Panc1 (cell line): ENCODE measurements at regions of chr17 and their contacts with region 1.

Region 1: GRCh38 chr17:7632492-7632894 is 2.6 kb downstream of the SHBG start:
- DNase-seq: no peak
- ATAC-seq: peak; percentile 76
- H3K4me3 ChIP-seq: no peak overlapping the region
- H3K27ac ChIP-seq: no peak overlapping the region
- H3K4me1 ChIP-seq: 0 out of 2 replicates have a peak, but pooled peaks cover 2% of the 10 kb centered on the region
- H3K27me3 ChIP-seq: no peaks in the 10 kb centered on the region
- CTCF ChIP-seq: peak; percentile 80

Region 2: DNA sequence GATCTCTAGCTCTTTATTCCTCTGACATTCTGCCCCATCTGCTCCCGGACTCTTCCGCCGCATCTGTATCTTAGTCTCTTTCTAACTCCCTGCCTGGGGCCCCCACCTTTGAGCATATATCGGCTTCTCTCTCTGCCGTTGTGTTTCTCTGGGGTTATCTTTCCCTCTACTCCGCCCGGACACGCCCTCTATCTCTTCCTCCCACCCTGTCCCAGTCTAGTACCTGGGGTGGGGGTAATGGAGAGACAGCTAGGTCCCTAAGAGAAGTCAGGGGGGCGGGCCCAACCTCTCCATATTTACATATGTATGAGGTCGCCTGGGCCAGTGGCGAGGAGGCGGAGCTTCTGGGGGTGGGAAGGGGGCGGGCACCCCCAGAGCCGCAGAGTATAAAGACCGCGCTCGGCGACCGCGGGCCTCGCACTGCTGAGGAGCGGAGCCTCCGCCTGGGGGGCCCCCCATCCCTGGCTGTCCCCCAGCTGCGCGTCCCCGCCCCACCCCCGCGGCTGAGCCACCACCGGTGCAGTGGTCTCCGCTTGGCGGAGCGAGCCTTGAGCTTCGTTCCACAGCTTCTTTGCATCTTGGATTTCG is 18.1 kb after region 1 on chr17 and contains the start of gene ATP1B2:
- CTCF ChIA-PET with region 1: no interaction called
- POLR2A ChIA-PET with region 1: interaction called, 10 read pairs
- in situ Hi-C with region 1: no loop called
- intact Hi-C with region 1: no loop called
- DNase-seq: no peak
- ATAC-seq: peak; percentile 84
- H3K4me3 ChIP-seq: peak within 1 kb of the TSS; percentile 26 to 47
- H3K27ac ChIP-seq: no peak within 1 kb of the TSS
- H3K4me1 ChIP-seq: no peaks in the 10 kb centered on the region
- H3K27me3 ChIP-seq: peaks cover 2% of the 10 kb centered on the region; the same call in 1 of the 2 replicates
- CTCF ChIP-seq: no peak
- total RNA-seq, gene ATP1B2: 0.08 TPM

Region 3: DNA sequence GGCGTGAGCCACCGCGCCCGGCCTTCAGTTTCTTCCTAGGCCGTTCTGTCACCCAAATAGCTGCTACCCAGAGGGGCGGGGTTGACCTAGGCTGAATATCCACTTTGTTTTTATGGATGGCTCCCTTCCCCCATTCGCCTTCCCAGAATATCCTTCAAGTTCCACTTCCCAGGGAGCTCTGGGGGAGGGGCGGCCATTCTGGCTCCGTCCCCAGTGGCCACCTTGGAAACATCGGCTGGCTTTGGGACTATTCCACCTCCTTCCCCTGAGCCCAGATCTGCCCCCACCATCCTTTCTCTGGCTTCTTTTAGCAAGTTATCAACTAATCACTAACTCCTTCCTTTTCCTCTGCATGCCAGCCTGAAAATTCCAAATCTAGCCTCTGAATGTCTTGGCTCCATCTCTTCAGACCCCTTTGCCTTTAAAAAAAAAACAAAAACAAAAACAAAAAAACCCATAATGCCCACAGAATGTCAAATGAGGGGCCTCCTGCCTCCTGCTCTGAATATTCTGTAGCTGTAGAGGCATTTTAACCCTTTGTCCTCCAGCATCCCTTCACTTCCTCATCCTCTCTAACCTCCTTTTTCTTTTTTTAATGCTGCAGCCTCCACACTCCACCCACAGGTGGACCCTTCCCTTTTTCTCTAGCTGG is 24.6 kb after region 1 on chr17:
- CTCF ChIA-PET with region 1: no interaction called
- POLR2A ChIA-PET with region 1: interaction called, 13 read pairs
- in situ Hi-C with region 1: no loop called
- intact Hi-C with region 1: no loop called
- DNase-seq: no peak
- ATAC-seq: no peak
- H3K4me3 ChIP-seq: no peak overlapping the region
- H3K27ac ChIP-seq: no peak overlapping the region
- H3K4me1 ChIP-seq: no peaks in the 10 kb centered on the region; the same call in 1 of the 2 replicates
- H3K27me3 ChIP-seq: peaks cover 1% of the 10 kb centered on the region; the same call in 1 of the 2 replicates
- CTCF ChIP-seq: no peak

Region 4: GRCh38 chr17:7803981-7804380 is 171.5 kb after region 1 on chr17:
- CTCF ChIA-PET with region 1: interaction called, 14 read pairs
- POLR2A ChIA-PET with region 1: no interaction called
- in situ Hi-C with region 1: no loop called
- intact Hi-C with region 1: no loop called
- DNase-seq: no peak
- ATAC-seq: peak; percentile 60; the same call in 1 of the 2 replicates
- H3K4me3 ChIP-seq: no peak overlapping the region
- H3K27ac ChIP-seq: no peak overlapping the region
- H3K4me1 ChIP-seq: no peaks in the 10 kb centered on the region; the same call in 1 of the 2 replicates
- H3K27me3 ChIP-seq: no peaks in the 10 kb centered on the region
- CTCF ChIP-seq: no peak